ENCODE measurements at regions of chr3 and their contacts with region 1.

Region 1: DNA sequence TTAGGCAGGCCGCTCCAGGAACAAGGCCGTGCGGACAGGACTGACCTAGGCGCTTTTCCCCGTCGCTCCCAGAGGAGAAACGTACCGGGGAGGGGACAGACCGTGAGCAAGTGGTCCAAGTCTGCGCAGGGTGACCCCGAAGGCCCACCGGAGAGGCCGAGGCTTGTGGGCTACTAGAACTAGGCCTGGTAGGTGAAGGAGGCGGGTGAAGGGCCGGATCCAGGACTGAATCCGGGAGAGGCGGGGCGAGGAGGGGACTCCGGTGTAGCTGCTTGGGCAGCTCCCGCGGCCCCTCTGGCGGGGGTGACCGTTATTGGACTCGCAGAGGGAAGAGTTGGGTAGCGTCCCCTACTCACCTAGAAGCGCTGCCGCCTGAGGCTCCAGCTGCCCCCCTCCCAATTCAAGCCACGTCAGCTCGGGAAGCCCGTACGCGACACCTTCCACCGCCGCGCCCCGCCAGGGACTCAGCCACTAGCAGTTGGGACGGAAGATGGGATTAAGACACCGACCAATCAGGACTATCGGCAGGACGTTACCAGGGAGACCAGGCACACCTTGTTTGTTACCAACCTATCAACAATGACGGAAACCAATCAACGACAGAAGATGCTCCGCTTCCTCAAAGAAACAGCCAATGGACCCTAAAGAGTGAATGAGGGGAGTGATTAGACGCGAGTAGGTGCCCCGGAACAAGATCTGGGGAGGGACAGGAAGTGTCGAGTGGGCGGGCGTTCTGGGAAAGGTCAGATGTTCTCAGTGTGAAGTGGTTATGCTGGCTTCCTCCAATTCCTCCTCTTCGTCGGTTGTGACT is at the start of gene GOLGB1:
- DNase-seq: peak; percentile 89
- H3K4me3 Mint-ChIP-seq: no peak within 1 kb of the TSS
- H3K27ac Mint-ChIP-seq: no peak within 1 kb of the TSS
- H3K4me1 Mint-ChIP-seq: peaks cover 5% of the 10 kb centered on the region
- H3K27me3 Mint-ChIP-seq: peaks cover 12% of the 10 kb centered on the region
- total RNA-seq, gene GOLGB1: 23.2 and 23.6 TPM in 2 replicates

Region 2: GRCh38 chr3:121431726-121432517 is 317.6 kb before region 1 on chr3:
- intact Hi-C with region 1: loop called (anchors 10 kb)
- DNase-seq: peak; percentile 59
- H3K4me3 Mint-ChIP-seq: no peak overlapping the region
- H3K27ac Mint-ChIP-seq: peak overlapping the region; percentile 30
- H3K4me1 Mint-ChIP-seq: peaks cover 30% of the 10 kb centered on the region
- H3K27me3 Mint-ChIP-seq: no peaks in the 10 kb centered on the region

Region 3: GRCh38 chr3:121654493-121655385 is 94.7 kb before region 1 on chr3:
- intact Hi-C with region 1: loop called (anchors 1 kb)
- DNase-seq: peak; percentile 9
- H3K4me3 Mint-ChIP-seq: peak overlapping the region; percentile 50
- H3K27ac Mint-ChIP-seq: peak overlapping the region; percentile 79
- H3K4me1 Mint-ChIP-seq: peaks cover 87% of the 10 kb centered on the region
- H3K27me3 Mint-ChIP-seq: no peaks in the 10 kb centered on the region

Region 4: DNA sequence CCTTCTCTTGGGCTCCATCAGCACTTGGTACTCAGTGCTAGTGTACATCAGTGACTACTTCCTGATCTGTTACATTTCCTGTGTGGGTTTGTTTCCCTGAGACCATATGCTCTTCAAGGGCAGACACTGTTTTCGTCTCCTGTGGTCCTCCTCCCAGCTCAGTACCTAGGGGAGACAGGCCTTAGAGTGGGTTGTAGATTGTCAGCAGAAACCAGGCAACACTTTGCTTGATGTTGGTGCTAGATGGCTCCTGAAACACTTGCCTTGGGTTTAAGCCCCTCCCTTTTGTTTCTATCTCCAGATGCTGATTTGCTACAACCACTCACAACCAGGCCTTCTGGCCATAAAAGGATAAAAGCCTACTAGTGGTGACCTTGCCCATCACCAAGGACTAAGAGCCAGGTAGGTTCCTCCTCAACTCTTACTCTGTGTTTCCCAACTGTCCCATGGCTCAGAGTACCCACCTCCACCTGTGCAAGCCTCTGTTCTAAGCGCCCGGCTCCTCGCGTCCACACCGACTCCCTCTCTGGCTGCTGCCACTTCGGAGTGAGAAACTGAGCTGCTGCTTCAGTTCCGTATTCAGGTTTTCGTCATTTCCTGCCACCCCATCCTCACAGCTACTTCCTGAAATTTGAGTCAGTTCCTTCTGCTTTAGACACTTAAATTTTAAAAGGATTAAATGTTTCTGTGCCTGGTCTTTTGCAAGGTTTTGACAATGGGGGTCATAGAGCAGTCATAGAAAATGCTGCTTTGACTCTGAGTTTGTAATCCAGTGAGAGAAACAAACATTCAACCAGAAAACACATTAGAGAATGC is 88.9 kb before region 1 on chr3 and contains the start of gene HCLS1:
- intact Hi-C with region 1: loop called (anchors 1 kb)
- DNase-seq: peak; percentile 73
- H3K4me3 Mint-ChIP-seq: peak within 1 kb of the TSS; percentile 95
- H3K27ac Mint-ChIP-seq: peak within 1 kb of the TSS; percentile 99
- H3K4me1 Mint-ChIP-seq: peaks cover 57% of the 10 kb centered on the region
- H3K27me3 Mint-ChIP-seq: no peaks in the 10 kb centered on the region
- total RNA-seq, gene HCLS1: 234 and 235 TPM in 2 replicates

Region 5: DNA sequence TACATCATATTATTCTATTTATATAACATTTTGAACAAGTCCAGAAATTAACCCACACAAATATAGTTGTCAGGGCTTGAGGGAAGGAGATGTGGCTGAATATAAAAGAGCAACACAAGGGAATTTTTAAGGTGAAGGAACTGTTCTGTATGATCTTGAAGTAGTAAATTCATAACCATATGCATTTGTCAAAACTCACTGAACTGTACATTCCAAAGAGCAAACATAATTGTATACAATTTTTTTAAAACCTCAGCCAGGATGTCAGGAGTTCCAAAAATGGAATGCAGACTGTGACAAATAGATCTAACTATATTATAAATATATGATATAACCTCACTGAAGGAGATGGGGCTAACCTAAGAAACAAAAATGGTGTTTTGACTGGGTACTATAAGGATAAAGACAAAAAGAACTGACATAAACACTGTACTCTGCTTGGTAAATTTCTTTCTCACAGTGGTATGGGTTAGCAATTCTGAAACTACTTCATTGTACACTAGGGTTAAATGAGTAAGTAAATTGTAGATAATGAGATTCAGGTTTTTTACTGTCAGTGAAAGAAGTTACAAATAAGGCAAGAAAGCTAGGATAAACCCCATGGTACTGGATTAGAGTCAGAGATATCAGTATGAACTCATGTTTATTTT is 14.3 kb before region 1 on chr3:
- intact Hi-C with region 1: loop called (anchors 1 kb)
- DNase-seq: no peak
- H3K4me3 Mint-ChIP-seq: no peak overlapping the region
- H3K27ac Mint-ChIP-seq: peak overlapping the region; percentile 36
- H3K4me1 Mint-ChIP-seq: peaks cover 41% of the 10 kb centered on the region
- H3K27me3 Mint-ChIP-seq: no peaks in the 10 kb centered on the region

Region 6: DNA sequence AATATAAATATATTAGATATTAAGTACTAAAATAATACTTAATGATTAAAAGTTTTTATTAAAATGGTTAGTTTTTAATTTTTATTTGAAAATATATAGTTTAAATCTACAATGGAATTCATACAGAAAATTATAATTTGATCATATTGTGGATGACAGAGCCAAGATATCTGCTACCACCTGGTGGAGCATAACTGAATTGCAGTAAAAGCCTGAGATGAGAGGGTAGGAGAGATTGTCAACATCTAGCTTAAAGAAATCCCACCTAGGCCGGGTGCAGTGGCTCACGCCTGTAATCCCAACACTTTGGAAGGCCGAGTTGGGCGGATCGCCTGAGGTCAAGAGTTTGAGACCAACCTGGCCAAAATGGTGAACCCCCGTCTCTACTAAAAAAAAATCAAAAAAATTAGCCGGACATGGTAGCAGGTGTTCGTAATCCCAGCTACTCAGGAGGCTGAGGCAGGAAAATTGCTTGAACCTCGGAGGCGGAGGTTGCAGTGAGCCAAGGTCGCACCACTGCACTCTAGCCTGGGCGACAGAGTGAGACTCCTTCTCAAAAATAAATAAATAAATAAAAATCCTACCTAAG is 550.5 kb after region 1 on chr3:
- intact Hi-C with region 1: loop called (anchors 5 kb)
- DNase-seq: no peak
- H3K4me3 Mint-ChIP-seq: no peak overlapping the region
- H3K27ac Mint-ChIP-seq: no peak overlapping the region
- H3K4me1 Mint-ChIP-seq: peaks cover 28% of the 10 kb centered on the region
- H3K27me3 Mint-ChIP-seq: no peaks in the 10 kb centered on the region

Measured in activated T-helper 1 cell treated with anti-CD3 and anti-CD28 coated beads, Interleukin-12 subunit alpha, Interleukin-12 subunit beta, Interleukin-2, Interleukin-4 antibody, amounts not matched to agents 30 ng/mL and 10 ng/mL and 1 ng/mL, durations not matched to agents 14 hours and 24 hours and 36 hours (primary cell).